MCF 10A (cell line): ENCODE measurements at regions of chr12 and their contacts with region 1.

Region 1: DNA sequence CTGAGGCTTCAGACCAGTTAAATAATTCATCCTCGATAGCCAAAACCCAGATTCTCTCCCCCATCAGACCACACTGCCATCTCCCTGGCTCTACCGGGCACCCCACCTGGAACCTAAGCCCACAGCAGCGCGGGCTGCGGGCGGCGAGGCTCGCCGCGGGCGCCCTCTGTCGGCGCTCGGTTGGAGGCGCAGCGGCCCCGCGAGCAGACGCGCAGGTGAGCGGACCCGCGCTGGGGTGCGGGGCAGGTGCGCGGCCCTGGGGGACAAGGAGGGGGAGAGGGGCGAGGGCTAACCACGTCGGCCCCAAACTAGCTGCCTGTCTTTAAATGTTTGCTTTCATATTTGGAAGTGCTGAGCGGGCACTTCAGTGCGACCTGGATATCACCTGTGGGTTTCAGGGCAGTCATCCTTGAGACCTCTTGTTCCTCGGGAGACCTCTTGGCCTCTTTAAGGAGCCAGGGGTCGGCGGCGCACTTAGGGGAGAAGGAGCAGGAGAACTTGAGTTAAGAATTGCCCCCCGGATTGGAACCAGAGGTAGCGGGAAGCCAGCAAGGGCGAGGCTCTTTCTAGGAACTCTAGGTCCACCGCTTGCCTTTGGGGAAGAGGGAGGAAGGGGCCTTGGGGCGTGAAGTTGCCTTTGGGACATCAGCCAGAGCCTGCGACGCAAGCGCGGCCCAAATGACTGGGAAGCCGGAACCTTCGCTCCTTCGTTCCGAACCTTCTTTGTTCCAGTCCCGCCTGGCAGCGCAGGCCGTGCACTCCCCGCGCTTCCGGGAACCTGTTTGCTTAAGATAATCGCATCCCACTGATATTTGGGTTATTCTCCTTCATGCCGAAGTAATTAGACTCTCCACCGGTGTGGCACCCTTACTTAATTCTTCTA is 78.7 kb downstream of the NEDD1 start:
- DNase-seq: peak; percentile 21
- H3K4me3 Mint-ChIP-seq: no peak overlapping the region
- H3K27ac Mint-ChIP-seq: no peak overlapping the region
- H3K4me1 Mint-ChIP-seq: peaks cover 5% of the 10 kb centered on the region
- H3K27me3 Mint-ChIP-seq: peaks cover 22% of the 10 kb centered on the region
- CTCF ChIP-seq: peak; percentile 88

Region 2: GRCh38 chr12:96400798-96401599 is 584.7 kb before region 1 on chr12:
- CTCF ChIA-PET with region 1: no interaction called
- POLR2A ChIA-PET with region 1: no interaction called
- intact Hi-C with region 1: no loop called
- DNase-seq: peak; percentile 72
- H3K4me3 Mint-ChIP-seq: peak overlapping the region; percentile 98
- H3K27ac Mint-ChIP-seq: peak overlapping the region; percentile 98
- H3K4me1 Mint-ChIP-seq: peaks cover 24% of the 10 kb centered on the region
- H3K27me3 Mint-ChIP-seq: no peaks in the 10 kb centered on the region
- CTCF ChIP-seq: peak; percentile 16

Region 3: DNA sequence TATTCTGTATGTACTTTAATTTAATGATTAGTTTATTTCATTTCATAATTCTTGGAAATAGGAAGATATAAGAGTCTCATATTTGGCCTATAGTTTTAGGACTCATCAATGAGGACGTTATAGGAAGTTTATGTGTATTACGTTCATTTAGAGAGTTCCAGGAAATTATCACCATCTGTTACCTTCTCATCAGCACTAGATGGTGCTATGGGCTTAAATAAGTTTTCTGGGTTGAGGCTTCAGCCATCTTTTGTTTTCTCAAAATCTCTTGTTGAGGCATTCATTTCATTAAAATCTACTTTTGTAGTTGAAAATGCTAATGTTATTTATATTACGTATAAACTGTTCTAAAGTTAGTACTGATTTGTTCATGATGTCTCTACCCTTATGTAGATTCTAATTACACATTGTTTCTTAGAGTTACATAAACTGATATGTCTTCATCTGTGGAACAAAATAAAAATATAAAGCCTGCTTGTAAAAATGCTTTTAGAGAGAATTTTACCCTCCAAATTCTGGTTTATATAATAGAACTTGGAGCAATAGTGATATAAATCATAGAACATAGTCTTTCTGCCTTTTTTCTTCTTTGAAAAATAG is 407.1 kb before region 1 on chr12:
- CTCF ChIA-PET with region 1: interaction called, 48 read pairs
- POLR2A ChIA-PET with region 1: interaction called, 3 read pairs
- intact Hi-C with region 1: loop called (anchors 1 kb)
- DNase-seq: peak; percentile 72
- H3K4me3 Mint-ChIP-seq: no peak overlapping the region
- H3K27ac Mint-ChIP-seq: no peak overlapping the region
- H3K4me1 Mint-ChIP-seq: no peaks in the 10 kb centered on the region
- H3K27me3 Mint-ChIP-seq: no peaks in the 10 kb centered on the region
- CTCF ChIP-seq: peak; percentile 60

Region 4: DNA sequence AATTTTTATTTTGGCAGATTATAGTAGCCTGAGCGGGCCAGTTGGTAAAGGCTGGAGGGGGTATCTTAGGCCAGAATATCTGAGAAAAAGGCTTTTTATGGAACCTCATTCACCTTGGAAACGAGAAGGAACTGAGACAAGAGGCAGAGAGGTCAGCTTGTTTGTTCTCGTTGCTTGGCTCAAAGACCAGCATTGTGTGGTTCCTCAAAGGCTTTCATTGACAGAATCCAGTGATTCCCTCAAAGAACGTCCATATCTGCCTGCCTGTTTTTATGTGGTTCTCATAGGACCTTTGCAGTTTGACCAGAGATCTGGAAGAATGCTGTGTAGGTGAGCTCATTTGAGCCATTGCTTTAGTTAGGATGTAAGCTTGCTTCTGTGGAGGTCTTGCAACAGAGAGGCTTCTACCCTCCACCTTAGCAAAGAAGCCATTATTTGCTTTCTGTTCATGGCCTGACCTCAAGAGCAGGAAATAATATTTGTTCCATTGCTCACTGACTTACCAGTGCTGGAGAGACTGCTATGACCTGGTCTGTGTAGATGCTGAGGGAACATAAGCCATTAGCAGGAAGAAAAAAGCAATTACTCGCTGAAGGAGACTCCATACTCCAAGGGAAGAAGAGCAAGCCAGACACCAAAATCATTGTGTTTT is 379.0 kb before region 1 on chr12:
- CTCF ChIA-PET with region 1: no interaction called
- POLR2A ChIA-PET with region 1: no interaction called
- intact Hi-C with region 1: no loop called
- DNase-seq: no peak
- H3K4me3 Mint-ChIP-seq: no peak overlapping the region
- H3K27ac Mint-ChIP-seq: no peak overlapping the region
- H3K4me1 Mint-ChIP-seq: no peaks in the 10 kb centered on the region
- H3K27me3 Mint-ChIP-seq: no peaks in the 10 kb centered on the region
- CTCF ChIP-seq: no peak

Region 5: GRCh38 chr12:97308576-97309198 is 323.0 kb after region 1 on chr12:
- CTCF ChIA-PET with region 1: interaction called, 115 read pairs
- POLR2A ChIA-PET with region 1: no interaction called
- intact Hi-C with region 1: loop called (anchors 1 kb)
- DNase-seq: peak; percentile 57
- H3K4me3 Mint-ChIP-seq: no peak overlapping the region
- H3K27ac Mint-ChIP-seq: no peak overlapping the region
- H3K4me1 Mint-ChIP-seq: no peaks in the 10 kb centered on the region
- H3K27me3 Mint-ChIP-seq: peaks cover 51% of the 10 kb centered on the region
- CTCF ChIP-seq: peak; percentile 57

Region 6: GRCh38 chr12:98002712-98003493 is 1017.2 kb after region 1 on chr12:
- CTCF ChIA-PET with region 1: interaction called, 4 read pairs
- POLR2A ChIA-PET with region 1: no interaction called
- intact Hi-C with region 1: loop called (anchors 1 kb)
- DNase-seq: peak; percentile 59
- H3K4me3 Mint-ChIP-seq: no peak overlapping the region
- H3K27ac Mint-ChIP-seq: no peak overlapping the region
- H3K4me1 Mint-ChIP-seq: no peaks in the 10 kb centered on the region
- H3K27me3 Mint-ChIP-seq: peaks cover 22% of the 10 kb centered on the region
- CTCF ChIP-seq: peak; percentile 52

Region 7: DNA sequence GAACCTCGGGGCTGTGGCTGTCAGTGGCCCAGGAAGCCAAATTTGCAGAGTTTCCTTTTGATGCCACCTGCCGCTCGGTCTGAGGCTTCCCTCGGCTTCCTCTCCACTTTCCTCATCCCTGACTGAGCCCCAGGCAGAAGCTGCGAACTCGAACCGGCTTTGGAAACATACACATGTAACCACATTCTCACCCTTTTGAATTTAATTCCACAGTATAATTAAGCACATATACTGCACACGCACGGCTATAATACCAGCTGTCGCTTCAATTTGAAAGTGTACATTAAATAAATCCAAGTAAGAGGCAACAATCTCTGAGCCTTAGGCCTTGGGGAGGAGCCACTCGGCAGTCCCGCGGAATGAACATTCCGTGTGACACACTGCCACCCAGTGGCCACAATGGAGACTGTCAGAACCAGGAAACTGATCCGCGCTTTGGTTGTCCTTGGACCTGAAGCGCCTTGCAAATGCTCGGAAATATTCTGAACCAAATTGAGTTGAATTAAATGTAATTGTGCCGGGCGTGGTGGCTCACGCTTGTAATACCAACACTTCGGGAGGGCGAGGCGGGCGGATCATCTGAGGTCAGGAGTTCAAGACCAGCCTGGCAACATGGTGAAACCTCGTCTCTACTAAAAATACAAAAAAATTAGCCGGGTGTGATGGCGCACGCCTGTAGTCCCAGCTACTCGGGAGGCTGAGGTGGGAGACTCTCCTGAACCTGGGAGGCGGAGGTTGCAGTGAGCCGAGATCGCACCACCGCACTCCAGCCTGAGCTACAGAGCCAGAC is 1411.8 kb after region 1 on chr12:
- CTCF ChIA-PET with region 1: interaction called, 17 read pairs
- POLR2A ChIA-PET with region 1: no interaction called
- intact Hi-C with region 1: loop called (anchors 2 kb)
- DNase-seq: peak; percentile 82
- H3K4me3 Mint-ChIP-seq: peak overlapping the region; percentile 74
- H3K27ac Mint-ChIP-seq: peak overlapping the region; percentile 29
- H3K4me1 Mint-ChIP-seq: peaks cover 19% of the 10 kb centered on the region
- H3K27me3 Mint-ChIP-seq: peaks cover 6% of the 10 kb centered on the region
- CTCF ChIP-seq: peak; percentile 85

Region 8: DNA sequence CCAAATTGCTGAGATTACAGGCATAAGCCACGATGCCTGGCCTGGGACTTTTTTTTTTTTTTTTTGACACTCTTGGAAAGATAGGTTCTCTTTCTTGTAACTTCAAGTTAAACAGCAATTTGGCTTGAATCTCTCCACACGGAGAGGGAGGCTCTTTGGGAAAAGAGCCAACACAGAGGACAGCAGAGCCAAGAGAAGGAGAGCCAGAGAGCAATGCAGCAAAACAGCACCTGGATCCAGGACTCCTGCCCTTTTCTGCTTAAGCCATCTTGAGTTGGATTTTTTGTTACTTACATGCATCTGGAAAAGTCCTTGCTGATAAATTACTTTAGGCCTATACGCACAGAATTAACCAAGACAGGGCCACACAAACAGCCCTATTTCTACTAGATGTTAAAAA is 1836.1 kb after region 1 on chr12:
- CTCF ChIA-PET with region 1: no interaction called
- POLR2A ChIA-PET with region 1: no interaction called
- intact Hi-C with region 1: no loop called
- DNase-seq: no peak
- H3K4me3 Mint-ChIP-seq: no peak overlapping the region
- H3K27ac Mint-ChIP-seq: no peak overlapping the region
- H3K4me1 Mint-ChIP-seq: no peaks in the 10 kb centered on the region
- H3K27me3 Mint-ChIP-seq: no peaks in the 10 kb centered on the region
- CTCF ChIP-seq: no peak